ENCODE measurements at regions of chr6 and their contacts with region 1.

Region 1: GRCh38 chr6:3324262-3324942 is 65.7 kb downstream of the PSMG4 start:
- DNase-seq: no peak
- ATAC-seq: peak; percentile 38 to 84
- H3K4me3 ChIP-seq: no peak overlapping the region
- H3K27ac ChIP-seq: peak overlapping the region; percentile 77
- H3K4me1 ChIP-seq: no peaks in the 10 kb centered on the region
- H3K27me3 ChIP-seq: no peaks in the 10 kb centered on the region

Region 2: DNA sequence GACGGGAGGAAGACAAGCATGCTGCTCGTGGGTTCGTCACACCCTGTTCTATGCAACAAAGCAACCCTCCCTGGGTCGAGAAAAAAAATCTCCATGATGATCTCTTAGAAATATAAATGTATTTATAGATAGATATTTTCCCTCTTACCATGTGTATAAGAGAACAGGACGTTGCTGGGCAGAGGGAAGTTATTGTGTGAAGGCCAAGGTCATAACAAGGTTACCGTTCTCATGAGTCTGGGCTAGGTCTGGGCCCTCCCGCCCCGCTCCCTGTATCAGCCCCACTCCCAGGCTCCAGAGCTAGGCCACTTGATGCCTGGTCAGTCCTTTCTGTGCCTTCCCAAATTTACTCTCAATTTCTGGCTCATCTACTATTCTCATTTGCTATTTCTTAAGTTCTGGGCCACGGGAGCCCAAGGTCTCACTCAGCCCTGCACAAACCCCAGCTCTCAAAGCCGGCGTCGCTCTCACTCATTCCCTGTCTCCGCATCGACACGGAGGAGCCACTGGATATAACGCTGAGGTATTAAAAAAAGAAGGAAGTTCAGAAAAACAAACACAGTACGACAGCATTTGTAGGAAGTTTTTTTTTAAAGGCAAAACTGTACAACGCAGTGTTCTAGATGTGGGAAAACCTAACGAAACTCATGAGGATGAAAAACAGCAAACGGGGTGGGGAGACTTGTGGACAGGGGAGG is 31.1 kb after region 1 on chr6:
- intact Hi-C with region 1: loop called in 1 of 4 experiments (anchors 2 kb)
- DNase-seq: peak; percentile 57 to 74 (median 70)
- ATAC-seq: peak; percentile 64 to 73
- H3K4me3 ChIP-seq: peak overlapping the region; percentile 1
- H3K27ac ChIP-seq: peak overlapping the region; percentile 94
- H3K4me1 ChIP-seq: peaks cover 6% of the 10 kb centered on the region
- H3K27me3 ChIP-seq: no peaks in the 10 kb centered on the region

Region 3: GRCh38 chr6:3473773-3474172 is 149.4 kb after region 1 on chr6:
- intact Hi-C with region 1: no loop called
- DNase-seq: no peak
- ATAC-seq: no peak
- H3K4me3 ChIP-seq: no peak overlapping the region
- H3K27ac ChIP-seq: no peak overlapping the region
- H3K4me1 ChIP-seq: no peaks in the 10 kb centered on the region
- H3K27me3 ChIP-seq: no peaks in the 10 kb centered on the region